MCF 10A (cell line): ENCODE measurements at regions of chr9 and their contacts with region 1.

Region 1: DNA sequence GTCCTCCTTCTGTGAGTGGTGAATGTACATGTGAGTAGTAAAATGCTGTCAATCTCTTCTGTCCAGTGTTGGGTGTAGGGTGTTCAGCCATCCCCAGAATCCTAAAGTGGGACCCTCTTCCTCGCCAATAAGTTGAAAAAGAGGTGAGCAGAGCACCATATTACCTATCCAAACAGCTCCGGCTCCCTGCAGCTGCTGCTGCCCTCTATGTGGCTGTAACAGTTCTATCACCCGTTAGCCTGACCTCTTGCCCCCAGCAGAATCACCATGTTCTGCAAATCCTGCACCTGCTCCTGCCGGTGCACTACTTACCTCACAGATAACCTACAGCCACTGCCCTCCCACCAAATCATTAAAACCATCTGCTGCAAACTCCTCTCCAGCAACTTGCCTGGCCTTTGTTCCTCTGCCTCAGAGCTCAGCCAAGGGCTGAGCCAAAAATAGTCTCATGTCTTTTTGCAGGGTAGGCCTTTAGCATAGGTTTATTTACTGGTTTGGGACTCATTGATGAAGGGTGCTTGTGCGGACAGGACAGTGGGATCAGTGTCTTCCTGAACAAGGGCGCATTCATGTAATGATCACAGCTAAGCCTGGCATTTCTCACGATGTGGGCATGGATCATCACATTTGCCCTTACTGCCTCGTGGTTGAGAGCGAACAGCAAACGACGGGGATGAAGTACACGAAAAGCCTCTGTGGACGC is 49.6 kb upstream of the CCL21 start:
- DNase-seq: no peak
- H3K4me3 Mint-ChIP-seq: no peak overlapping the region
- H3K27ac Mint-ChIP-seq: no peak overlapping the region
- H3K4me1 Mint-ChIP-seq: no peaks in the 10 kb centered on the region
- H3K27me3 Mint-ChIP-seq: peaks cover 40% of the 10 kb centered on the region
- CTCF ChIP-seq: no peak

Region 2: GRCh38 chr9:34744295-34745221 is 15.0 kb before region 1 on chr9:
- CTCF ChIA-PET with region 1: interaction called, 26 read pairs
- POLR2A ChIA-PET with region 1: interaction called, 5 read pairs
- intact Hi-C with region 1: no loop called
- DNase-seq: peak; percentile 88
- H3K4me3 Mint-ChIP-seq: no peak overlapping the region
- H3K27ac Mint-ChIP-seq: no peak overlapping the region
- H3K4me1 Mint-ChIP-seq: peaks cover 24% of the 10 kb centered on the region
- H3K27me3 Mint-ChIP-seq: no peaks in the 10 kb centered on the region
- CTCF ChIP-seq: no peak

Region 3: GRCh38 chr9:34777666-34778065 is 18.1 kb after region 1 on chr9:
- CTCF ChIA-PET with region 1: no interaction called
- POLR2A ChIA-PET with region 1: no interaction called
- intact Hi-C with region 1: no loop called
- DNase-seq: no peak
- H3K4me3 Mint-ChIP-seq: no peak overlapping the region
- H3K27ac Mint-ChIP-seq: no peak overlapping the region
- H3K4me1 Mint-ChIP-seq: no peaks in the 10 kb centered on the region
- H3K27me3 Mint-ChIP-seq: peaks cover 50% of the 10 kb centered on the region
- CTCF ChIP-seq: no peak

Region 4: GRCh38 chr9:34869390-34869789 is 109.8 kb after region 1 on chr9:
- CTCF ChIA-PET with region 1: interaction called, 8 read pairs
- POLR2A ChIA-PET with region 1: interaction called, 3 read pairs
- intact Hi-C with region 1: loop called (anchors 2 kb)
- DNase-seq: peak; percentile 47
- H3K4me3 Mint-ChIP-seq: no peak overlapping the region
- H3K27ac Mint-ChIP-seq: no peak overlapping the region
- H3K4me1 Mint-ChIP-seq: no peaks in the 10 kb centered on the region
- H3K27me3 Mint-ChIP-seq: peaks cover 43% of the 10 kb centered on the region
- CTCF ChIP-seq: peak; percentile 22

Region 5: DNA sequence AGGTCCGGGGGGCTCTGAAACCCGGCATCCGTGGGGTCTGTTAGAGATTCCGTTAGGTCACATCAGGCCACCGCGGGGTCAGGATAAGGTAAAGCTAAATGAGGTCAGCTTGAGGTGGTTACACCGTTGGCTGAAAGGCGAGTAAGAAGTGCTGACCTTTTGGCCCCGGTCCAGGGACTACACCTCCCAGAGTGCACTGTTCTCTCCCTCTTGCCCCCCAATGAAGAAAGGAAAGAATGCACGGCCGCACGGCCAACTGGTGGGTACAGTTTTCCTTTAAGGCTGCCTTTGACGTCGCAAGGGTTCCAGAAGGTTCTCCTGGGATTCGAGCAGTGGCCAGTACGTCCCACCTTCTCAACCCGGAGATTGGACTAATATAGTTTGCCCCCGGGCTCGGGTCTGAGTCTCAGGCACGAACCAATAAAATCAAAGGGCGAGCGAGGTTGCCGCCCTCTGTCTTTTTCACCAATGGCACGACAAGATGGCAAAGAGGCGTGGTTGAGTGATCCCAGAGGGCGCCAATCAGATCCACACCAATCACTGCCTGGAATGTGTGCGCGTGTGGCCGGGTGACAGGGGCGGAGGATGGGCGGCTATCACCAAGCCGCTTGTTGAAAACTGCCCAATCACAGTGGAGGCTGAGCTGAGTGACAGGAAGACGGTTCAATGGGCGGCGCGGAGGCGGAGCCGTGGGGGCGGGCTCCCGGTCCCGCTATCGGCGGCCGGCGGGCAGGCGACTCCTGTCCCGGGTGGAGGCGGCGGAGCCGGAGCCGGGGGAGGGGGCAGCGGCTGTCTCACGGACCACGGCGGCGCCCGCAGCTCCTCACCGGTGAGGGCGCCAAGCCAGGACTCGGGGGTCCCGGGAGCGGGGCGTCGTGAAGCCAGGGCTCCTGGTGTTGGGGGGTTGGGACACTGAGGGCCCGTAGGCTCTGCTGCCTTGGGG is 229.7 kb after region 1 on chr9 and contains the start of gene DNAJB5:
- CTCF ChIA-PET with region 1: interaction called, 12 read pairs
- POLR2A ChIA-PET with region 1: no interaction called
- intact Hi-C with region 1: loop called (anchors 2 kb)
- DNase-seq: peak; percentile 99
- H3K4me3 Mint-ChIP-seq: peak within 1 kb of the TSS; percentile 78
- H3K27ac Mint-ChIP-seq: peak within 1 kb of the TSS; percentile 46
- H3K4me1 Mint-ChIP-seq: peaks cover 32% of the 10 kb centered on the region
- H3K27me3 Mint-ChIP-seq: no peaks in the 10 kb centered on the region
- CTCF ChIP-seq: no peak
- total RNA-seq, gene DNAJB5: 2.2 and 2.9 TPM in 2 replicates

Region 6: DNA sequence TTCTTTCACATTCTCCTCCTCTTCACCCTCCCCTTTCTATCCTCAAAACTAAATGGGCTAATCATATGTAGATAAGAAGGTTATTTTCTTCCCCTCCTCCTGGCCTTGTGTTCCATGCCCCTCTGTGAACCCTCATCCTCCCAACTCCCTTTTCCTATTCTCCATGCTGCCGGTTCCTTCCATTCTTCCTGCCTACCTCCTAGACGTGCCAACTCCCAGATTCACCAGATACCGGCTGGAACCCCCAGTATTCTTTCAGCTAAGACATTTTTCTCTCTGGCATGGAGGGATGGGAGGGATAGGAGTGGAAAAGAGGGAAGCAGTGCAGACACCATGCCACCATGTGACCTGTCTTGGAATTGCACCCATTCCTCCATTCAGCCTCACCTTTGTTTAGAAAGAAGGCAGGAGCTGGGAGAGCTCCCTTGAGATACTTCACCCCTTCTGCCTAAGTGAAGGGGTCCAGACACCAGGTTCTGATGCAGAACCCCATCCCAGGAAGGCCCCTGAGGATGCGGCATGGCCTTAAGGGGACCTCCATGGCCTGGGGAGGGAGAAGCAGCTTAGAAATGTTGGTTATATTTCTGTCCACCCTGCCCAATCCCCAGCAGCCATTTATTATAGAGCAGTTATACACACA is 234.8 kb after region 1 on chr9:
- CTCF ChIA-PET with region 1: interaction called, 12 read pairs
- POLR2A ChIA-PET with region 1: no interaction called
- intact Hi-C with region 1: no loop called
- DNase-seq: peak; percentile 77
- H3K4me3 Mint-ChIP-seq: no peak overlapping the region
- H3K27ac Mint-ChIP-seq: no peak overlapping the region
- H3K4me1 Mint-ChIP-seq: peaks cover 38% of the 10 kb centered on the region
- H3K27me3 Mint-ChIP-seq: no peaks in the 10 kb centered on the region
- CTCF ChIP-seq: peak; percentile 76

Region 7: DNA sequence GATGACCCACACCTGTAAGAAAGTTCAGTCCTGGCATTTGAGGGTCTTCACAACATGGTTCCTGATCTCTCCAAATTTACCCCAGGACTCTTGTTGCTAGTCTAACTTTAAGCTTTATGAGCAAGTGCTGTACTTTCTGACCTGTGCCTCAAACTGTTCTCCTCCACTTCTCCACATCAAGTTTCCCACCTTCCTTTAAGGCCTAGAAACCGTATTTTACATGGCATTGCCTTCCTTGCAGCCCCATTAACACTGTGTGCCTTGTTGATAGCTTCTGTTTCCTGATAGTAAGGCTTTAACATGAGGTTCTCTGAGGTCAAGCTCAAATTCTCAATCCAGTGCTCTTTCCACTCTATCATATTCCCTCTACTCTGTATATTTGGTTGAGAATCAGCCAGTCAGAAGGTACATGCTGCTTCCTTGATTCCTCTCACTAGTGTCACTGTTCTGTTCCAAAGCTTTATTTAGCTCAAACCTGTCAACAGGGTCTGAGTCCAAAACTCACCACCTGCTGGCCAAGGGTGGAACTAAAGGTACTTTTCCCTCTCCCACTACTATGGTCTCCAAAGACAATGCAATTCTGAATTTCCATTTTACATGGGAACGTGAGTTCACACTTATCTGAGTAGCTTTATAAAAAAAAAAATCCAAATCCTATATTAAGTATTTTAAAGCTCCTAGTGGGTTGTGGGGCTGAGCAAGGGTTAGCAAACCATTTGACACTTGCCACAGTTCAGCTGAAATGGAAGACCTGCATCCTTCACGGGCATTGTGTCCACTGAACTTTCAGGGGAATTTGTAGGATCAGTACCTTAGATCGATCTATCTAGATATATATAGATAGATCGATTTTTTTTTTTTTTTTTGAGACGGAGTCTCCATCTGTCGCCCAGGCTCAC is 291.7 kb after region 1 on chr9:
- CTCF ChIA-PET with region 1: interaction called, 7 read pairs
- POLR2A ChIA-PET with region 1: no interaction called
- intact Hi-C with region 1: loop called (anchors 5 kb)
- DNase-seq: peak; percentile 72
- H3K4me3 Mint-ChIP-seq: no peak overlapping the region
- H3K27ac Mint-ChIP-seq: peak overlapping the region; percentile 10
- H3K4me1 Mint-ChIP-seq: peaks cover 5% of the 10 kb centered on the region
- H3K27me3 Mint-ChIP-seq: no peaks in the 10 kb centered on the region
- CTCF ChIP-seq: peak; percentile 42

Region 8: DNA sequence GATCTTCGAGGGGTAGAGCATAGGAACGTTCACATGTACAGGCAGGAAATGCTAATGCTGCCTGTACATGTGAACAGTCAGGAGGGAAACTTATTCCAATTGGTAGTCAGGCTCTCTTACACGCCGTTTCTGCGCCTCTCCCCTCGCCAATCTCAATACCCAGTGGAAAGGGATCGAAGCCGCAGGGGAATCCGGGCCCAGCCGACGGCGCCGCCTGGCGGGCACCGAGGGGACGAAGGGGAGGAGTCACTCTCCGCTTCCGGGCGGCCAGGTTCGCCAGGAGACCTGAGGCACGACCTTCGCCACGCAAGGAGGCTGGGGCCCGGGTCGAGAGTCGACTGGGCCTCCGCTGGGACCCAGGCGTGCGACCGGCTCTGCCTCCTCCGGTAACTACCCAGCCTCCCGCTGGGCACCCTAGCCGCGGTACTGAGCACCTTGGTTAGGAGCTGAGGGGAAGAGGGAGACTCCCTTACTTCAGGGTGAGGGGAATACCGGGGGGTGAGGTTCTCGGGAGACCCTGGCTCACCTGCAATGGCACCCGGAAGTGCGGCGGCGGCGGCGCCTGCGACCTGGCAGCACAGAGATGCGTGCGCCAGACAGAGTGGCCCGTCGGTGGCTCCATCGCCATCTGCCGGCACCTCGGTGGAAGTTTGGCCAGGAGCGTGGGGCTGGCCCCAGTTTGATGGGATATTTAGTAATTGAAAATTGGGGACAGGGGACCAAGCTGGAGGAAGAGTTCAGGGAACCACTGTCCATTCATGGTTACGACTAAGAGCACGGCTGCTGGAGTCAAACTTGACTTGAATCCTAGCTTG is 336.7 kb after region 1 on chr9 and contains the start of gene PIGO:
- CTCF ChIA-PET with region 1: interaction called, 4 read pairs
- POLR2A ChIA-PET with region 1: no interaction called
- intact Hi-C with region 1: loop called (anchors 1 kb)
- DNase-seq: peak; percentile 85
- H3K4me3 Mint-ChIP-seq: peak within 1 kb of the TSS; percentile 85
- H3K27ac Mint-ChIP-seq: peak within 1 kb of the TSS; percentile 95
- H3K4me1 Mint-ChIP-seq: peaks cover 15% of the 10 kb centered on the region
- H3K27me3 Mint-ChIP-seq: no peaks in the 10 kb centered on the region
- CTCF ChIP-seq: peak; percentile 49
- total RNA-seq, gene PIGO: 34.8 and 39.2 TPM in 2 replicates